Posterior cingulate gyrus (tissue), 11 donors: ENCODE measurements at regions of chr1 and their contacts with region 1.

Region 1: DNA sequence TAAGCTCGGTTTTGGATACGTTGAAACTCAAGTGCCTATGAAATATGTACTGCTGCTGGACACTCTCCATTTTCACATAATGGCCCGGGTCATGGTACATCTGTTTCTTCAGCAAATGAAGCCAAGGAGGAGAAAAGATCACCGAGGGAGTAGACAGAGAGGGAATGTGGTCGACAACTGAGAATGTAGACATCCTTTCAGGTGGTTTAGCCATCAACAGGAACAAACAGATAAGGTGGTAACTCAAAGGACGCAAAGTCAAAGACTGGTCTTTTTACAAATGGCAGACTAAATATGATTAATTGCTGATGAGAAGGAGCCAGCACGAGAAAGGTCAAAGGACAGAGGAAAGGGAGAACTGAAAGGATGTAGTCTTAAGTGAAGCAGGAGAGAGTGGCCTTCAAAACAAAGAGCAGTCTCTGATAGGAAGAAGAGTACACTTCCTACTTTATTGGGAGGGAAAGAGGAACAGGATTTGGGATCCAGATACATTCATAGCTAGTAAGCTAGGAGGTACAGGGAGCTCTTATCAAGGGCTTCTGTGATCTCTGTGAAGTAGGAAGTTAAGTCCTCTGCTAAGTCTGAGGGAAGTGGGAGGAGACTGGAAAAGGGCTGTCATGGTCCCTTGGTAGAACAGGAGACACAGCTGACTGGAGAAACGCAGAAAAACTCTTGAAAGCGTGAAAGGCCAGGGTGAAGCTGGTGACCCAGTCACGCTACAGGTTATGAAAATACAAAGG is 28.3 kb downstream of the NUP133 start:
- DNase-seq: no peak

Region 2: GRCh38 chr1:229341774-229342655 is 137.8 kb before region 1 on chr1:
- intact Hi-C with region 1: loop called (anchors 5 kb)
- DNase-seq: peak; percentile 86 to 99 (median 90)

Region 3: DNA sequence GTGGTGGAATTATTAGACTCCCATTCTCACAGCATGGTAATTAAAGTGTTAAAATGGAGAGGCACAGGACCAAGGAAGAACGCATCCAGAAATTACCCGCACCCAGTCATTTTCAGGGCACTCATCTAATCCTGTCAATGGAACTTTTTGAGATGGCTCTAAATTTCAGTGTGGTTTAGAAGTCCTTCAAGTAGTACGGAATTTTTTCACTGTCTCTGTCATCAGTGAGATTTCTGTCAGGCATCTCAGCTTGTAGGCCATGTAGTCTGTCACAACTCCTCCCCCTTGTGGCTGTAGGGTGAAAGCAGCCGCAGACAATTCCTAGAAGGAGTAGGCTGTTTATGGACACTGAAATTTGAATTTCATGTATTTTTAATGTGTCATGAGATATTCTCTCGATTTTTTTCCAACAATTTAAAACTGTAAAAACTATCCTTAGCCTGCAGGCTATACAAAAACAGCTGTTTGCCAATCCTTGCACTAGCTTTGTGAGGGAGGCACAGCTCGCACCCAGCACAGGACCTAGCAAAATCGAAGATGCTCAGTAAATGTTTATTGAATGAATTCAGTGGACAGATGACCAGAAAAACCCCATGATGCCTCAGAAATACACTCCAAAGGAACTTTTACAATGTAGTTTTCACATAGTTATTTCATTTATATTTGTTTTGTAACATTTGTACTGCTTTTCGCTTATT is 34.9 kb after region 1 on chr1:
- intact Hi-C with region 1: no loop called
- DNase-seq: peak; percentile 45 to 96 (median 70)

Region 4: DNA sequence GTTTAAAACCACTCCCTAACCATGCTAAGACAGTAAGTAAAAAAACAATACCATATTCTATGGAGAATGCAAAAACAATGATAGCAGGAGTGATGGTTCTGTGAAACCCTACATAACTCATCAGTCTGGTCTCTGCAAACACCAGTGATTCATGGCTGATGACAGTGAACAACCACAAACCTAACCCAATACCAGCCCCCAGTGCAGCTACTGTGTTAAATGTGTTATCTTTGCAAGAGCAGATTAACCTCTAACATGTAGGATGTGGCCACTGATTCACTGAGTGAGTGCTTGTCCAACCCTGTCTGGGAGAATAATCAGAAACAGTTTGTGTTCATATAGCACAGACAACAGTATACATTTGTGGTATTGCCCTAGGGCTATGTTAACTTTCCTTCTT is 1062.2 kb after region 1 on chr1:
- intact Hi-C with region 1: no loop called
- DNase-seq: no peak